AG04450 (cell line): ENCODE measurements at regions of chr18 and their contacts with region 1.

Region 1: DNA sequence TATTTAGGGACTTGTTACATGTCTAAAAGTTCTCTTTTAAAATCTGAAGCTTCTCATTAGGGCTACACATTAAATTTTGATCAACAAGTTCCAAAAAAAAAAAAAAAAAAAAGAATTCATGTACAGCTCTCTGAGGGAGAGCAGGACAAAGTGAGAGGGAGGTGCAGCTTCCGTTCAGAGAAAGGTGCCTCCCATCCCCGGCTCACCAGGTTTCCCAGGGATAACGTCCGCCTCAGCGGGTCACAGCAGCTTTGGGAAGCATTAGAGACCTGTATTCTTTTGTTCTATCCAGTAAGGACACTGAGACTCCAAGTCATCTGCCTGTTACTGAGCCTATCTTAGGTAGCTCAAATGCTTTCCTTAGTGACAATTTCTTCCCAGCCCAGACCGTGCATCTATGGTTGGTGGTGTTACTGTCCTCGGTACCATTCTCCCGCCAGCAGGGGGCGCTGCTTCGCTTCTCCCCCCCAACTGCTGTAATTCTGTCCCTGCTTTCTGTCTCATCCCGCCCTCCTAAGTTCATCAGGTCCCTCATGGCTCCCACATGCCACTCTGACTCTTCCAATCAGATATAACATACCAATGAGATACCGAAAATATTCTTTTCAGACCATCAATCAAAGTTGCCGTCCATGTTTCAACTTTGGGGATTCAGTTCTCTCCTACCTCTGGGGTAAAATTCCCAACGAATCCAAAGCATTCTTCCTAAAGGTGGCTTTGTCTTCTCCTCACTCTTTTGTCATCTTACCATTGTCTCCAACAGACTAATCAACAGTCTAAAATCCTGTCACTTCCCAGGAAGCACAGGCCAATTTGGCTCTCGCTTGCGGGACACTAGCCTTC is 466.5 kb downstream of the METTL4 start:
- DNase-seq: peak; percentile 11
- H3K4me3 ChIP-seq: no peak overlapping the region
- H3K27ac ChIP-seq: no peak overlapping the region
- H3K27me3 ChIP-seq: no peaks in the 10 kb centered on the region
- CTCF ChIP-seq: peak; percentile 78

Region 2: DNA sequence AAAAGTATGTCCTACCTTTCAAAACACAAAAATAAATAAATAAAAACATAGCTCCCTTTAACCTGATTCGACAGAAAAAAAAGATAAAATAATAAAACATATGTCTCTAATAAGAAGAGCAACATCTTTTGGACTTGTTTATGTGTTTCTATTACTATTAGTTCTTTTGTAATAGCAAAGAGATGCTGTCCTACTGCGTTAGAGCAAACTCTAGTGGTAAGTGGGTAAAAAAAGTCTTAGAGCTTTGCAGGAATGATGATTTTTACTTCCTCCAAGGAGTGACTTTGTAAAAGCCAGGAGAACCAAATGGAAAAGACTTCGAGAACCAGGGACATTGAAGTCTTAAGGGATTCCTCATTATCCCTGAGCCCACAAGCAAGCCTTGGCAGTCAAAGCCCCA is 16.4 kb after region 1 on chr18:
- CTCF ChIA-PET with region 1: interaction called, 17 read pairs
- POLR2A ChIA-PET with region 1: no interaction called
- DNase-seq: no peak
- H3K4me3 ChIP-seq: no peak overlapping the region
- H3K27ac ChIP-seq: no peak overlapping the region
- H3K27me3 ChIP-seq: peaks cover 5% of the 10 kb centered on the region
- CTCF ChIP-seq: no peak

Region 3: GRCh38 chr18:2223849-2224248 is 119.0 kb after region 1 on chr18:
- CTCF ChIA-PET with region 1: interaction called, 91 read pairs
- POLR2A ChIA-PET with region 1: no interaction called
- DNase-seq: no peak
- H3K4me3 ChIP-seq: peak overlapping the region; percentile 39
- H3K27ac ChIP-seq: no peak overlapping the region
- H3K27me3 ChIP-seq: no peaks in the 10 kb centered on the region
- CTCF ChIP-seq: peak; percentile 68

Region 4: DNA sequence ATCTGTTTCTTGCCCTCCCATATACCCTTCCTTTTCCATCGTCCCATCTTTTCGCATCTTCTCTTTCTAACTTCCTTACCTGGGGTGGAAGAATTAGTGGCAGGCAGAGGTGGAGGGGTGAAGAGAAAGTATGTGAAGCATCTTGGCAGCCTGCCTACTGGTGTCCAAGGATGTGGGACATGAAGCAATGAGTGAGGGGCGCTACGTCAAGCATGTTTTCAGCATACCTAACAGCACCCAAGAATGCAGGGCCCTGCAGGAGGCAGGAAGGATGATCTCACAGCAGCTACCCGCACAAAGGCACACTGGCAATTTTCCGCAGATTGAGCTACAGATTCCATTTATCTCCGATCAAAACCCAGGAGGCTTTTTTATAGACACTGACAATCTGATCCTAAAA is 424.3 kb after region 1 on chr18:
- CTCF ChIA-PET with region 1: interaction called, 10 read pairs
- POLR2A ChIA-PET with region 1: no interaction called
- DNase-seq: no peak
- H3K4me3 ChIP-seq: no peak overlapping the region
- H3K27ac ChIP-seq: no peak overlapping the region
- H3K27me3 ChIP-seq: no peaks in the 10 kb centered on the region
- CTCF ChIP-seq: no peak

Region 5: DNA sequence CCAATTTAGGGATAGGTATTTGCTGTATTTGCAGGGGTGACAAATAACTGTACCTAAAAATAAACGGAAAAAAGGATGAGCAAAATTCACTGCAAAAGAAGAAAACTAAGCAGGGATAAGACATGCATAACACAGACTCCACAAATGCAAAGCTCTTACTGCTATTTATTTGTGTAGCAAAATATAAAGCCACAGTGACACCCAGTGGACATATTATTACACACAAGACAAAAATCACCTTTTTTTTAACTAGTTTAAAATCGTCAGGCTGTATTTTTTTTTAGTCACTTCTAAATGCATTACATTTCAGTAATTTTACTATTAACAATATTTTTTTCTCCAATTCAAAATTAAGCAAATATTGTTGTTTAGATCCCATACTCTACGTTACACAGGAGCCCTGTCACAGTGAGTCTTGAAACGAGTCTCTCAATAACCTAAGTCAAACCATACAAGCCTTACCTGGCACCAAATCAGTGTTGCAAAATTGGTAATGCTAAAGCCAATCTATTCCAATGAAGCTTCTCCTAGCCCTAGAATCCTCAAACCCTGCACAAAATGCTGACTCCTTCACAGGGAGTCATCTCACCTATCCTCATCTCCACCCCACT is 442.7 kb after region 1 on chr18:
- CTCF ChIA-PET with region 1: interaction called, 362 read pairs
- POLR2A ChIA-PET with region 1: no interaction called
- DNase-seq: peak; percentile 36
- H3K4me3 ChIP-seq: no peak overlapping the region
- H3K27ac ChIP-seq: no peak overlapping the region
- H3K27me3 ChIP-seq: no peaks in the 10 kb centered on the region
- CTCF ChIP-seq: peak; percentile 58